ENCODE measurements at regions of chr4 and their contacts with region 1.

Region 1: DNA sequence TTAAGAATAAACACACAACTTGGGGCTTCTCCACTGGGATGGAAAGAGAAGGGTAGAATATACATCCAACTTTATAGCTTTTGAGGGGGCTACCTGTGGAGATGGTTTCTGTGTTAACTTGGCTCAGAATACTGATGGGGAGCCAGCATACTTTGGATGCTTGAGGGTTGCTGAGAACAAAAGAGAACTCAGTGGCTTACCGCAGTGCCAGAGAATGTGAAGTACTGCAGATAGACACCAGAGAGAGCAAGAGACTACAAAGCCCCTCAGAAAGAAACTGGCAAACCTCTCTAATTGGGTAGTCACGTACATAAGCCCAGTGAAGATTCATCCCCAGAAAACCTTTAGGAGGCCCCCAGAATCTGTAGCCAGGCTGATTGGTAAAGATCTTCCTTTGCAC is 214.4 kb downstream of the DCHS2 start:
- DNase-seq: no peak
- ATAC-seq: no peak
- H3K4me3 ChIP-seq: no peak overlapping the region
- H3K27ac ChIP-seq: no peak overlapping the region
- H3K4me1 ChIP-seq: no peaks in the 10 kb centered on the region
- H3K27me3 ChIP-seq: no peaks in the 10 kb centered on the region
- CTCF ChIP-seq: no peak

Region 2: GRCh38 chr4:153759407-153760316 is 517.5 kb before region 1 on chr4 and contains the start of gene RNF175:
- intact Hi-C with region 1: no loop called
- DNase-seq: no peak
- ATAC-seq: peak in 4 of 8 donors; percentile 12 to 61 (median 34)
- H3K4me3 ChIP-seq: peak within 1 kb of the TSS; percentile 21 to 57 (median 52)
- H3K27ac ChIP-seq: no peak within 1 kb of the TSS
- H3K4me1 ChIP-seq: peaks cover 0 to 12% (median 6%) of the 10 kb centered on the region in 9 donors
- H3K27me3 ChIP-seq: peaks cover 8 to 64% (median 47%) of the 10 kb centered on the region in 7 donors
- CTCF ChIP-seq: no peak
- total RNA-seq, gene RNF175: 0.23 to 1.3 (median 0.55) TPM in 9 of 10 donors, not detected in the other

Region 3: DNA sequence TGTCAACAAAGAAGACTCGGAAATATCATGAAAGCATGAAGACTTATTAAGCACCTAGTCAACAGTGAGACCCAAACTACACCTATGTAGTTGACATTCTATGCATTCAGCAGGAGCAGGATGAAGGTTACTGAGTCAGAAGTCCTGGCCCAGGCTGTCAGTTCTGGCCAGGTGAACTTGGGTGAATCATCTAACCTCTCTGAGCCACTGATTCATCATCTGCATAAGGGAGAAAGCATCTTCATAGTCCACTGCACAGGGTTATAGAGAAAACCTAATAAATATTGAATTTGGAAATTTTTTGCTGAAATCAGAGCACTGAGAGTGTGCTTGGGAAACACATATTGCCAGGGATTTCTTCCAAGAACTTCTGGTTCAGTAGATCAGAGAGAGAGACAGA is 192.3 kb before region 1 on chr4:
- intact Hi-C with region 1: loop called in 1 of 10 experiments (anchors 10 kb)
- DNase-seq: no peak
- ATAC-seq: no peak
- H3K4me3 ChIP-seq: no peak overlapping the region
- H3K27ac ChIP-seq: no peak overlapping the region
- H3K4me1 ChIP-seq: no peaks in the 10 kb centered on the region
- H3K27me3 ChIP-seq: peaks cover 0 to 7% (median 0%) of the 10 kb centered on the region in 7 donors
- CTCF ChIP-seq: no peak

Region 4: GRCh38 chr4:154503598-154503997 is 226.4 kb after region 1 on chr4:
- intact Hi-C with region 1: no loop called
- DNase-seq: no peak
- ATAC-seq: no peak
- H3K4me3 ChIP-seq: no peak overlapping the region
- H3K27ac ChIP-seq: no peak overlapping the region
- H3K4me1 ChIP-seq: no peaks in the 10 kb centered on the region
- H3K27me3 ChIP-seq: peaks cover 0 to 53% (median 33%) of the 10 kb centered on the region in 7 donors
- CTCF ChIP-seq: peak in 6 of 9 donors; percentile 20 to 51 (median 32)

Region 5: GRCh38 chr4:154578919-154579318 is 301.7 kb after region 1 on chr4:
- intact Hi-C with region 1: no loop called
- DNase-seq: no peak
- ATAC-seq: no peak
- H3K4me3 ChIP-seq: no peak overlapping the region
- H3K27ac ChIP-seq: no peak overlapping the region
- H3K4me1 ChIP-seq: no peaks in the 10 kb centered on the region
- H3K27me3 ChIP-seq: peaks cover 0 to 29% (median 10%) of the 10 kb centered on the region in 7 donors
- CTCF ChIP-seq: no peak

Region 6: DNA sequence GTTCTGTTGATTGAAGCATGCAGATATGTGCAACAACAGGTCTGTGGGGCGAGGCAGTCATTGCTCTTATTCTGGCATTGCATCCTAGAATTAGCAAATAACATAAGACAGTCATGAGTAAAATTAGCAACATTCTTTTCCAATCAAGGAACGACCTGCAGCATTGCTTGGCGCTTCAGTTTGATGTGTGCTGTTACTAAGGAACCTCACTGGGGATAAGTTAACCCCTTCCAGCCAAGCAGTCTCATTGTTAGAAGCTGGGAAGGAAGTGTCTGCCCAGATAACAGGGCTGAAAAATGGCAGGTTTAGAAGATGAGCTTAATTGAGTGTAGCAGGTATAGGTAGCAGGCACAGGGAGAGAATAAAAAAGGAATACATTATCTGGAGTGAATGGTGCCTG is 559.3 kb after region 1 on chr4:
- intact Hi-C with region 1: no loop called
- DNase-seq: no peak
- ATAC-seq: no peak
- H3K4me3 ChIP-seq: no peak overlapping the region
- H3K27ac ChIP-seq: no peak overlapping the region
- H3K4me1 ChIP-seq: no peaks in the 10 kb centered on the region
- H3K27me3 ChIP-seq: no peaks in the 10 kb centered on the region
- CTCF ChIP-seq: no peak

Measured in heart right ventricle (tissue), 16 donors.